ENCODE measurements at regions of chr2 and their contacts with region 1.

Region 1: GRCh38 chr2:48200620-48201293 is 294.5 kb upstream of the FBXO11 start:
- DNase-seq: no peak
- H3K4me3 ChIP-seq: no peak overlapping the region
- H3K27ac ChIP-seq: no peak overlapping the region
- H3K4me1 ChIP-seq: no peaks in the 10 kb centered on the region
- H3K27me3 ChIP-seq: no peaks in the 10 kb centered on the region
- CTCF ChIP-seq: no peak
- POLR2A ChIP-seq: no peak

Region 2: DNA sequence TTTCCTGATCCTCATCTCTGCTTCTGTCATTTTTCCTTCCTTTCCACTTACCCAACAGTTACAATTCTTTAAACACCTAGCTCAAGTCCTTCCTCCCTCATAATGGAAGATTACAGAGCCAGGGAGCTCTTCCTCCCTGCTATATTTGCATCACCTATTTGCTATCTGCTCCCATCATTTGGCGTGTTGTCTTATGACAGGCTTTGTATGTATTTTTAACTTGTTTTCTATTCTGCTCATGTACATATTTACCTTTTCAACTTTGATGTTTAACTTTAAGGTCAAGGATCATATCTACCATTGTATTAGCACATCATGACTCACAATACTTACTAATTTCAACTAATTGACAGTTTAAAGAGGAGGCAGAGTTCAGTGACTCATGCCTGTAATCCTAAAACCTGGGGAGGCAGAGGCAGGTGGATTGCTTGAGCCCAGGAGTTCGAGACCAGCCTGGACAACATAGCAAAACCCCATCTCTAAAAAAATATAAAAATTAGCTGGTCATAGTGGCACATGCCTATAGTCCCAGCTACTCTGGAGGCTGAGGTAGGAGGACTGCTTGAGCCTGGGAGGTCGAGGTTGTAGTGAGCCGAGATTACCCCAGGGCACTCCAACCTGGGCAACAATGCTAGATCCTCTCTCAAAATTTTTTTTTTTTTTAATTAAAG is 21.2 kb after region 1 on chr2:
- intact Hi-C with region 1: loop called (anchors 1 kb)
- DNase-seq: no peak
- H3K4me3 ChIP-seq: no peak overlapping the region
- H3K27ac ChIP-seq: no peak overlapping the region
- H3K4me1 ChIP-seq: no peaks in the 10 kb centered on the region
- H3K27me3 ChIP-seq: no peaks in the 10 kb centered on the region
- CTCF ChIP-seq: no peak
- POLR2A ChIP-seq: no peak

Measured in breast epithelium (tissue), 4 donors.